Dendritic cell treated with granulocyte-macrophage colony-stimulating factor and Interleukin-4, amounts not matched to agents 40 ng/mL and 50 ng/mL, for 4 days (primary cell): ENCODE measurements at regions of chr16 and their contacts with region 1.

Region 1: GRCh38 chr16:21083729-21084268 is 66.8 kb downstream of the DNAH3 start:
- H3K4me3 Mint-ChIP-seq: no peak overlapping the region
- H3K27ac Mint-ChIP-seq: no peak overlapping the region
- H3K4me1 Mint-ChIP-seq: no peaks in the 10 kb centered on the region
- H3K27me3 Mint-ChIP-seq: no peaks in the 10 kb centered on the region

Region 2: GRCh38 chr16:20799599-20799998 is 284.2 kb before region 1 on chr16:
- intact Hi-C with region 1: loop called (anchors 1 kb)
- H3K4me3 Mint-ChIP-seq: no peak overlapping the region
- H3K27ac Mint-ChIP-seq: no peak overlapping the region
- H3K4me1 Mint-ChIP-seq: no peaks in the 10 kb centered on the region
- H3K27me3 Mint-ChIP-seq: no peaks in the 10 kb centered on the region

Region 3: DNA sequence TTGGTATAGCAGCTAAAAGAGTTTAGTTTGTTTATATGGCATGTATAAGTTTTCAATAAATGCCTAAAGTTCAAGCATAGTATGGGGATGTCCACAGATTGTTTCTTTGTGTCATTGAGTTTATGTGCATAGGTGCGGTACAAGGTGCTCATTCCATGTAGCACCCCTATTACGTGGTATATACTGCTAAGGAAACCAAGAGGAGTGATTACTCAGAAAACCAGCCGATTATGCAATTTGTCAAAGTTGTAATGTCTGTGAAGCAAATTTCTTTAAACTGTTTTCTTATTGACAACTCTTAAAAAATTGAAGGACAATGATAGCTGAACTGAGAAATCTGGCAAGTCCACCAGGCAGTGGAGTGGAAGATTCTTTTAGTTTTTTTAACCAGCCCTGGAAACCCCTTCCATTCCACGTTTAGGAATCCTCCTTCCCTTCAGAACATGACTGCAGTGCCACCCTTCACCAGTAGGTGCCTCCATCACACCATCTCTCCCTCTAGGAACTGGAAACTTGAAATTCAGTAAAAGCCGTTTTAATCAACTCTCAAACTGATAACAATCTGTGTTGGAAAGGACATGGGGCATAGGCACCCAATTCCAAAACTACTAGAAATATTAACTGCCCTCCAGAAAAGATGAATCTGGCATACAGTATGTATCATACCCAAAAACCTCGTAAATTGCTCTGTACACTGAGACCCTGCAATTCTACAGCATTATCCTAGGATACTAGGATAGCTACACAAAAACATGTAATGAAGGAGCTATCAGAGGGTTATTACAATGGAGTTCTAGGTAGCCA is 234.0 kb before region 1 on chr16:
- intact Hi-C with region 1: loop called (anchors 1 kb)
- H3K4me3 Mint-ChIP-seq: no peak overlapping the region
- H3K27ac Mint-ChIP-seq: peak overlapping the region; percentile 43
- H3K4me1 Mint-ChIP-seq: peaks cover 23% of the 10 kb centered on the region
- H3K27me3 Mint-ChIP-seq: no peaks in the 10 kb centered on the region

Region 4: GRCh38 chr16:21009815-21010214 is 74.0 kb before region 1 on chr16:
- intact Hi-C with region 1: no loop called
- H3K4me3 Mint-ChIP-seq: no peak overlapping the region
- H3K27ac Mint-ChIP-seq: no peak overlapping the region
- H3K4me1 Mint-ChIP-seq: peaks cover 7% of the 10 kb centered on the region
- H3K27me3 Mint-ChIP-seq: peaks cover 8% of the 10 kb centered on the region